A673 (cell line): ENCODE measurements at regions of chr6 and their contacts with region 1.

Region 1: DNA sequence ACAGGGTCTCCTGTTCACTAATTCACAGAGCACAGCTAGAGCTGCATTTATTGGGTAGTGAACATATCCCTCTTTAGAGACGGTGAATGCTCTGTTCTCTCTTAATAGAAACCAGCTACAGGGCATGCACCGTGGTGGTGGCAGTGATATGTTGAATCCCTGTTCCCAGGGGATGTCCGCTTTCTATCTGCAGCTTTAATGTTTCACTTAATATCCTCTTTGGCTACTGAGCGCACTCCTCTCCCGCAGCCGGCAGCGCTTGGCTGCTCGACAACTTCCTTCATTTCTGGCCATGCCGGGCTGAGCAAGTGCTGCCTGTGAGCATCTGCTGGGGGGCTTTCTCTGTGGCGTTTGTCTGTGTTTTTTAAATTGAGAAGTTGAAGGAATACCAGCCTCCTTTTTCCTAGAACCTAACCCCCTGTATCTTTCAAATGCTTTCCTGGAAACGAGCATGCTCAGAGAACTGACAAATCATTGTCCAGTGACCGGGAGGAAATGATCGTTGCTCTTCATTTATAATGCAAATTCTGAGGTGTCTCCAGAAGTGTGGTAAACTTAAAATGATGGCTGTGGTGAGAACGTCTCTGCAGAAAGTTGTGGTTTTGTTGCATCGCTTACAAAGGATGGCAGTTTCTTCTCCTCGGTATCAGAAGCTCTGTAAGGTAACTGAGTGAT is 297.9 kb downstream of the UTRN start:
- DNase-seq: peak; percentile 88
- H3K4me3 ChIP-seq: peak overlapping the region; percentile 51
- H3K27ac ChIP-seq: peak overlapping the region; percentile 36
- H3K4me1 ChIP-seq: peaks cover 41% of the 10 kb centered on the region
- H3K27me3 ChIP-seq: no peaks in the 10 kb centered on the region
- CTCF ChIP-seq: no peak

Region 2: GRCh38 chr6:144104898-144105487 is 478.1 kb before region 1 on chr6:
- CTCF ChIA-PET with region 1: no interaction called
- POLR2A ChIA-PET with region 1: no interaction called
- intact Hi-C with region 1: loop called (anchors 10 kb)
- DNase-seq: peak; percentile 85
- H3K4me3 ChIP-seq: no peak overlapping the region
- H3K27ac ChIP-seq: no peak overlapping the region
- H3K4me1 ChIP-seq: no peaks in the 10 kb centered on the region
- H3K27me3 ChIP-seq: no peaks in the 10 kb centered on the region
- CTCF ChIP-seq: peak; percentile 73

Region 3: DNA sequence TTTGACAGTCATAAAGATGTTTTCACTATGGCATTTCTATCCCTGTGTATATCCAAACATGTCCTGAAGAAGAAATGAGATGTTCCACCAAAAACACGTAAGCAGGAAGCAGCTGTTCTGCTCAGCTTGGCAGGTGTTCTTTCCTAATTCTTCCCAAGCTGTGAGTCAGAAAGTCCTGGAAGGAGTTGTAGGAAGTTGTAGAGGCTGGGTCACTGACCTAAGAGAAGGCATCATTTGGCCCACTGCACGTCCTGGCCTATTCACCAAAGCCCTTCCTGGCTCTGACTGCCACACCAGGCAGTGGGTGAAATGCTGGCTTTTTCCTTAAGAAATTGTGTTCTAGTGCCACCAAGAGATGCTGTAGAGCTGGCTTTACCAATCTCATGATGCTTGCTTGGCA is 392.5 kb before region 1 on chr6:
- CTCF ChIA-PET with region 1: no interaction called
- POLR2A ChIA-PET with region 1: no interaction called
- intact Hi-C with region 1: no loop called
- DNase-seq: no peak
- H3K4me3 ChIP-seq: no peak overlapping the region
- H3K27ac ChIP-seq: no peak overlapping the region
- H3K4me1 ChIP-seq: no peaks in the 10 kb centered on the region
- H3K27me3 ChIP-seq: no peaks in the 10 kb centered on the region
- CTCF ChIP-seq: no peak

Region 4: DNA sequence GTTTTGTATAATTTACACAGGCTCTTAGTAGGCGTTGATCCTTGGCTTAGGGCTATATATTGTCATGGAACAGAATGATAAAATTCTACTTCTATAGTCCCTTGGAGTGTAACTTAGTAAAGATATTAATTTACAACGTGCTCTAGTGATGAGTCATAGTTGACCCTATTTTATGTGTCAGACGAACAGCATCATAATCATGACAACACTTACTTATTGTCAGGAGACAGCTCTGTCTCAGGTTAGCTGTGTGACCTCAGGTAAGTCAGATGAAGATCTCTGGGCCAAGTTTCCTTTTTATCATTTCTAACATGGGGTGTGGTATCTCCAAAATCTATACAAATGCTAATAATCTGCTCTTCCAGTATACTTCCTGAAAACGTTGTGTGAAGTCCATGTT is 175.6 kb after region 1 on chr6:
- CTCF ChIA-PET with region 1: no interaction called
- POLR2A ChIA-PET with region 1: no interaction called
- intact Hi-C with region 1: no loop called
- DNase-seq: peak; percentile 2
- H3K4me3 ChIP-seq: no peak overlapping the region
- H3K27ac ChIP-seq: no peak overlapping the region
- H3K4me1 ChIP-seq: no peaks in the 10 kb centered on the region
- H3K27me3 ChIP-seq: no peaks in the 10 kb centered on the region
- CTCF ChIP-seq: no peak

Region 5: GRCh38 chr6:144931172-144932035 is 348.3 kb after region 1 on chr6:
- CTCF ChIA-PET with region 1: no interaction called
- POLR2A ChIA-PET with region 1: no interaction called
- intact Hi-C with region 1: loop called (anchors 1 kb)
- DNase-seq: peak; percentile 66
- H3K4me3 ChIP-seq: no peak overlapping the region
- H3K27ac ChIP-seq: no peak overlapping the region
- H3K4me1 ChIP-seq: no peaks in the 10 kb centered on the region
- H3K27me3 ChIP-seq: no peaks in the 10 kb centered on the region
- CTCF ChIP-seq: peak; percentile 74

Region 6: GRCh38 chr6:145137426-145137825 is 554.4 kb after region 1 on chr6:
- CTCF ChIA-PET with region 1: no interaction called
- POLR2A ChIA-PET with region 1: no interaction called
- intact Hi-C with region 1: loop called (anchors 5 kb)
- DNase-seq: peak; percentile 67
- H3K4me3 ChIP-seq: no peak overlapping the region
- H3K27ac ChIP-seq: no peak overlapping the region
- H3K4me1 ChIP-seq: peaks cover 18% of the 10 kb centered on the region
- H3K27me3 ChIP-seq: no peaks in the 10 kb centered on the region
- CTCF ChIP-seq: peak; percentile 36; the same call in 1 of the 2 replicates

Region 7: DNA sequence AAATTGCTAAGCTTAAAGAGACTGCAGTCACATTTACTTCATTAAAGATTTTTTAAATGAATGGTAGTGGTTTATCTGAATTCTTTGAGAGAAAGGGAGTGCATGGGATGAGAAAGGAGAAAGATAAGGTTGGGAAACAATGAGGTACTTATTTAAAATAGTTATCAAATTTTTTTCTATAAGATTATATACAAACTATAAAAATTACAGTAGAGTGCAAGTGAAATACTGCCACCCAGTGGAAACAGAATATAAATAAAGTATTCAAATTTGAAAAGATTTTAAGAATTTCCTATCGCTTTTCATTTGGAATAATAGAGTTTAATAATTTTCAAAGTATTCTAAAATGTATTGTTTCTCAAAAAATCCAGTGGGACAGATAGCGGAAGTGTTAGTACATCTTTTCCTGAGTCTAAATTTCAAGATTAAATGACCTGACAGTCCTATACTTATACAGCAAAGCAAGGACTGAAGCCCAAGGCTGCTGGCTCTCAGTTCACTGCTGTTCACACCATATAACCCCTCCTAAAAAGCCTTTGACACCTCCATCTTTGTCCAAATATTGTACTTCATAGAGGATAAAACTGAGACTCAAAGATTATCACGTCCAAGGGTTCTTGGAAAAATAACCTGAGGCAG is 1121.2 kb after region 1 on chr6:
- CTCF ChIA-PET with region 1: no interaction called
- POLR2A ChIA-PET with region 1: no interaction called
- intact Hi-C with region 1: loop called (anchors 2 kb)
- DNase-seq: peak; percentile 54
- H3K4me3 ChIP-seq: no peak overlapping the region
- H3K27ac ChIP-seq: no peak overlapping the region
- H3K4me1 ChIP-seq: peaks cover 14% of the 10 kb centered on the region
- H3K27me3 ChIP-seq: no peaks in the 10 kb centered on the region
- CTCF ChIP-seq: peak; percentile 69